Panc1 (cell line): ENCODE measurements at regions of chr5 and their contacts with region 1.

Region 1: DNA sequence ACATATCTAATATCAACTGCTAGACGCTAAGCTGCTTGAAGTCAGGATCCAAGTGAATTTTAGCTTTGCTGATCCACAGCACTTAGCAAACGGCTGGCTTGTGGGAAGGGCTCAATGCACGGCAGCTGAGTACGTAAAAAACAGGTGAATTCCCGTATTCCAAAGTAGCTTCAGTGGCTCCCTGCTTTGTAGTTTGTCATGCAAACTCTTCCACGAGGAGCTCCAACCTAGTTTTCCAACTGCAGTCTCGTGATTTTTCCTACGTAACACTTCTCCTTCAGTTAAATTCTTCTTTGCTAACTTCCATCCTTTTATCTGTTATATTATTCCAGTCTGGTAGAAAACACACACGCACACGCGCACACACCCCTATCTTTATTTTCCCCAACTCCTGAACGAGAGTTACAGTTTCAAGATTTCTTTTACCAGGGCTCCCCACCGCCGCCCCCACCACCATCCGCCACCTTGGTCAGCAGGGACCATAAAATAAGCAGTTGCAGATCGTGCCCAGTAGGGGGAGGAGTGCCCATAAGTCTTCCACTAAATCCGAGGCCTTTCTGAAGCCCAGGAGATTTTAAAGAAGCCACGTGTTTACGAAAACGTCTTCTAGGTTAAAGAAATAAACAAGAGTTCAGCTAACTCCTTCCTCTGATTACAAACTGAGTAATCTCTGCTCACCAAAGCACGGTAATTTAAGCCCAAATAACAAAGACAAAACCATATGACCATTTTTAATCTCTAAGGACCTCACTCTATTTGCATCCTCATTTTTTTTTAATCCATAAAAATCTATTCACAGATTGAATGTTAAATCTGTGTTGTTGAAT is 34.8 kb upstream of the TRIO start:
- DNase-seq: peak; percentile 88
- ATAC-seq: peak; percentile 82
- H3K4me3 ChIP-seq: peak overlapping the region; percentile 31 to 54
- H3K27ac ChIP-seq: peak overlapping the region; percentile 100
- H3K4me1 ChIP-seq: peaks cover 51% of the 10 kb centered on the region
- H3K27me3 ChIP-seq: no peaks in the 10 kb centered on the region
- CTCF ChIP-seq: peak; percentile 92

Region 2: GRCh38 chr5:13987843-13988464 is 120.4 kb before region 1 on chr5:
- CTCF ChIA-PET with region 1: interaction called, 10 read pairs
- POLR2A ChIA-PET with region 1: no interaction called
- in situ Hi-C with region 1: loop called (anchors 25 kb)
- intact Hi-C with region 1: loop called (anchors 5 kb)
- DNase-seq: peak; percentile 79
- ATAC-seq: peak; percentile 60
- H3K4me3 ChIP-seq: no peak overlapping the region
- H3K27ac ChIP-seq: peak overlapping the region; percentile 98
- H3K4me1 ChIP-seq: peaks cover 72% of the 10 kb centered on the region
- H3K27me3 ChIP-seq: no peaks in the 10 kb centered on the region
- CTCF ChIP-seq: peak; percentile 86

Region 3: GRCh38 chr5:14035859-14036440 is 72.4 kb before region 1 on chr5:
- CTCF ChIA-PET with region 1: interaction called, 3 read pairs
- POLR2A ChIA-PET with region 1: interaction called, 10 read pairs
- in situ Hi-C with region 1: no loop called
- intact Hi-C with region 1: loop called (anchors 5 kb)
- DNase-seq: peak; percentile 99
- ATAC-seq: peak; percentile 81
- H3K4me3 ChIP-seq: peak overlapping the region; percentile 10 to 35
- H3K27ac ChIP-seq: peak overlapping the region; percentile 100
- H3K4me1 ChIP-seq: peaks cover 58% of the 10 kb centered on the region
- H3K27me3 ChIP-seq: no peaks in the 10 kb centered on the region
- CTCF ChIP-seq: no peak

Region 4: GRCh38 chr5:14174230-14174637 is 65.9 kb after region 1 on chr5:
- CTCF ChIA-PET with region 1: no interaction called
- POLR2A ChIA-PET with region 1: no interaction called
- in situ Hi-C with region 1: loop called (anchors 10 kb)
- intact Hi-C with region 1: no loop called
- DNase-seq: no peak
- ATAC-seq: peak; percentile 31
- H3K4me3 ChIP-seq: peak overlapping the region; percentile 19 to 43
- H3K27ac ChIP-seq: peak overlapping the region; percentile 99
- H3K4me1 ChIP-seq: peaks cover 93% of the 10 kb centered on the region
- H3K27me3 ChIP-seq: no peaks in the 10 kb centered on the region
- CTCF ChIP-seq: no peak

Region 5: GRCh38 chr5:14264604-14265316 is 156.4 kb after region 1 on chr5:
- CTCF ChIA-PET with region 1: no interaction called
- POLR2A ChIA-PET with region 1: no interaction called
- in situ Hi-C with region 1: no loop called
- intact Hi-C with region 1: loop called (anchors 5 kb)
- DNase-seq: peak; percentile 89
- ATAC-seq: peak; percentile 68
- H3K4me3 ChIP-seq: peak overlapping the region; percentile 24 to 44
- H3K27ac ChIP-seq: peak overlapping the region; percentile 96
- H3K4me1 ChIP-seq: peaks cover 99% of the 10 kb centered on the region
- H3K27me3 ChIP-seq: no peaks in the 10 kb centered on the region
- CTCF ChIP-seq: no peak